ENCODE measurements at regions of chr15 and their contacts with region 1.

Region 1: DNA sequence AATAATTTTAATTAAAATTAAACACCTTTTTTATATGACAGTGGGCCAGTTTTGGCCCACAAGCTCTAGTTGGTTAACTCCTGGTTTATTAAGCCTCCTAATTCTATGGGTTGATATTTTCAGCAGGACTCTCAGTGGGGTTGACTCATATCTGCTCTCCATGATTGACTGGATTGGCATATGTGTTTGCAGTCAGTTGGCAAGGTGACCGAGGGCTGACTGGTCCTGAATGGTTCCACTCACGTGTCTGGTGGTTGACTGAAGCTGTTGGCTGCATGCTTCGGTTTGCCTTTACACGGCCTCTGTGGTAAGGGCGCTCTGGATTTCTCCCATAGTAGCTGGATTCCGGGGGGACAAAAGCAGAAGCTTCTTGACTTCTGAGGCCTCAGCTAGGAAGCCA is 65.3 kb upstream of the ZNF280D start:
- DNase-seq: no peak
- H3K4me3 ChIP-seq: no peak overlapping the region
- H3K27ac ChIP-seq: no peak overlapping the region
- H3K4me1 ChIP-seq: peaks cover 12% of the 10 kb centered on the region
- H3K27me3 ChIP-seq: no peaks in the 10 kb centered on the region

Region 2: DNA sequence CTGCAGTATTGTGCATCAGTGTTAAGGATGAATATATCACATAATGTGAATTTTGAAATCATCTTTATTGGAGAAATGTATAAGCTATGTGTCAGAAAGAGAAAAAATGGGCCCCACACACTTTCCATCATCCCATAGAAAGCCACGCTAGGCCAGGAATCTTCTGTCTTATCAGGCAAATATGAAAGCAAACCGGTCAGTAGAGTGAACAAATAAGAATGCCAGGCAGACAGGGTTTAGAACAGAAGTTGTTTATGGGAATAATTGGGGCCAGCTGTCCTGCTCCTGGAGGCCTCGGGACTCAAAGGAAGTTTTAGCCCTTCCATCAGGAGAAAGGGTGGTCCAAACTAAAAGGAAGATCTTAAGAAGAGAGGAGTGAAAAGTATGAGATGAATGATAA is 104.9 kb before region 1 on chr15:
- in situ Hi-C with region 1: loop called (anchors 25 kb)
- DNase-seq: no peak
- H3K4me3 ChIP-seq: no peak overlapping the region
- H3K27ac ChIP-seq: no peak overlapping the region
- H3K4me1 ChIP-seq: no peaks in the 10 kb centered on the region; the same call in 1 of the 2 replicates
- H3K27me3 ChIP-seq: no peaks in the 10 kb centered on the region

Measured in GM23248 (cell line).